ENCODE measurements at regions of chr20 and their contacts with region 1.

Region 1: DNA sequence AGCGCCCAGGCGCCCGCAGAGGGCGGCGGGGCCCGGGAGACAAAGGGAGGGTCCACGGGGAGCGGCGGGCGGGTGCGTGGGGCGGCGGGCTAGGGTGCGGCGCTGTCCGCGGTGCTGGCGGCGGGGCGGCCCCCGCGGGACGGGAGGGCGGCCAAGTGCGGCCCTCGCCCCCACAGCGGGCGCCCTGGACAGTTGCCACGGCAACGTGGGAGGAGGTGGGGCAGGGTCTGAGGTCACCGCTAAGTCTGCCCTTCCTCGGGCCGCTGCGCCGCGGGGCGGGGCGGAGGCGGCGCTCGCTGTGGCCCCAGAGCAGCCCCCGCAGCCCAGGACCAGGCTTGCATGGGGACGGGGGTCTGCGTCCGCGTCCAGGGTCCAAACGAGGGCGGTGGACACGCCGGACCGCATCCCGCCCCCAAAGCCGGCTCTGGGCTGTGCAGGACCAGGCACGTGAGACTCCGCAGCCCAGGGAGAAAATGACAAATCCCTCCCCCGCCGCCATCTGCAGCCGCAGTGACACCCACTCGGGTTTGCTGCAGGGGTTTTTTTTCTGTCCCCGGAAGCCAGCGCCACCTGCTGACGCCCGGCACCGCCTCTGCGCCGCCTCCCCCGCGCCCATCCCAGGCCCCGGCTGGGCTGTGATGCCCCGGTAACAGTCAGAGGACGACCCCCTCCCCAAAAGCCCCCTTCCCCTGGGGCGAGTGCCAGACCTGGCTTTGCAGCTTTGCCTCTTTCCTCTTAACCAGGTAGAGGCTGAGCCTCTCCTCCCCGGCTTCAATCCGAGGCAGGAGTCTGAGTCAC is 36.8 kb downstream of the YTHDF1 start:
- DNase-seq: no peak
- H3K4me3 ChIP-seq: no peak overlapping the region
- H3K27ac ChIP-seq: no peak overlapping the region
- H3K4me1 ChIP-seq: no peaks in the 10 kb centered on the region
- H3K27me3 ChIP-seq: peaks cover 40 to 55% of the 10 kb centered on the region in 2 experiments
- CTCF ChIP-seq: peak in 1 of 2 donors; percentile 20
- POLR2A ChIP-seq: no peak

Region 2: DNA sequence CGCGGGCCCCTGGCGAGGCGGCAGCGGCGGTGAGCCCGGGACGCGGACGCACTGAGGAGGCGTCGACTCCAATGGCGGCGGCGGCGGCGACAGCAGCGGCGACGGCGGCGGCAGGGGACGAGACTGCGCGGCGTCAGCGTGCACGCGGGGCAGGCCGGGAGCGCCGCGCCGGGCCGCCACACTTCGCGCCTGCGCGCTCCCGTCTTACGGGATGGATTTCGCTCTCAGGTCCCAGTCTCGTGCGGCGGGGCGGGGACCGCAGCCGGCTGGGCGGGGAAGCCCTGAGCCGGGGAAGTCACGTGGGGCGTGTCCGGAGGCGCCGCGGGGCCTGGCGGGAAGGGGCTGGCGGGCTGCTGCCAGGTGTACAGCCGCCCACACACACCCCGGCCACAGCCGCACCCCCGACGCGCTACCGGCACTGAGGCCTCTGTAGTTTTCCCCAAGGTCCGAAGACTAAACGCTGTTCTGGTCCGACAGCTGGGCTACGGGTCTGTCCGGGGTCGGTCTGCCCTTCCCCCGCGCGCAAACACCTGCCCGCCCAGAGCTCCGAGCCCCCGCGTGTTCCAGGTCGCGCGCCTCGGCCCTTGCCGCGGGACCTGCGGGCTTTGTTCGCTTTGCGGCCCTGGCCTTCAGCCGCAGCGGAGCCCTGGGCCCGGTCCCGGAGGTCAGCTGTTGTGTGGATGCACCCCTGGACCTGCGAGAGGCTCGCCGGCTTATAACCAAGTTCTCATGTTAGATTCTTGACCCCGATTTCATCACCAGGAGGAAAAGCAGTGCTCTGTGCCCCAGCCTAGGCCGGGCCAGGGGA is 37.2 kb after region 1 on chr20 and contains the start of gene YTHDF1:
- CTCF ChIA-PET with region 1: interaction called, 5 read pairs
- POLR2A ChIA-PET with region 1: no interaction called
- dilution Hi-C with region 1: no loop called
- intact Hi-C with region 1: loop called (anchors 5 kb)
- DNase-seq: peak; percentile 94
- H3K4me3 ChIP-seq: peak within 1 kb of the TSS; percentile 59 to 94 (median 86)
- H3K27ac ChIP-seq: peak within 1 kb of the TSS; percentile 79
- H3K4me1 ChIP-seq: peaks cover 13% of the 10 kb centered on the region
- H3K27me3 ChIP-seq: no peaks in the 10 kb centered on the region
- CTCF ChIP-seq: no peak
- POLR2A ChIP-seq: peak; percentile 75
- total RNA-seq, gene YTHDF1: 41.1 and 44.4 TPM in 2 replicates

Measured in endothelial cell of umbilical vein (primary cell).